Aorta (tissue), 5 donors: ENCODE measurements at regions of chr1 and their contacts with region 1.

Region 1: GRCh38 chr1:114979278-114979891 is 50.2 kb upstream of the TSHB start:
- DNase-seq: peak in 1 of 2 donors; percentile 47
- ATAC-seq: no peak
- H3K4me3 ChIP-seq: no peak overlapping the region
- H3K27ac ChIP-seq: no peak overlapping the region
- H3K4me1 ChIP-seq: no peaks in the 10 kb centered on the region
- H3K27me3 ChIP-seq: no peaks in the 10 kb centered on the region

Region 2: GRCh38 chr1:115052454-115053083 is 73.2 kb after region 1 on chr1:
- intact Hi-C with region 1: loop called (anchors 5 kb)
- DNase-seq: peak in 1 of 2 donors; percentile 62
- ATAC-seq: peak; percentile 73
- H3K4me3 ChIP-seq: no peak overlapping the region
- H3K27ac ChIP-seq: no peak overlapping the region
- H3K4me1 ChIP-seq: no peaks in the 10 kb centered on the region
- H3K27me3 ChIP-seq: no peaks in the 10 kb centered on the region

Region 3: GRCh38 chr1:115062542-115063011 is 83.2 kb after region 1 on chr1:
- intact Hi-C with region 1: no loop called
- DNase-seq: peak; percentile 77 to 80
- ATAC-seq: peak; percentile 69
- H3K4me3 ChIP-seq: no peak overlapping the region
- H3K27ac ChIP-seq: peak overlapping the region; percentile 88 to 98
- H3K4me1 ChIP-seq: peaks cover 2 to 4% of the 10 kb centered on the region in 2 donors
- H3K27me3 ChIP-seq: no peaks in the 10 kb centered on the region

Region 4: GRCh38 chr1:115112496-115113375 is 133.4 kb after region 1 on chr1:
- intact Hi-C with region 1: loop called (anchors 1 to 2 kb)
- DNase-seq: peak in 1 of 2 donors; percentile 81
- ATAC-seq: peak; percentile 81
- H3K4me3 ChIP-seq: no peak overlapping the region
- H3K27ac ChIP-seq: no peak overlapping the region
- H3K4me1 ChIP-seq: no peaks in the 10 kb centered on the region
- H3K27me3 ChIP-seq: no peaks in the 10 kb centered on the region

Region 5: GRCh38 chr1:115595279-115596079 is 616.1 kb after region 1 on chr1:
- intact Hi-C with region 1: loop called (anchors 5 to 10 kb)
- DNase-seq: peak; percentile 91 to 95
- ATAC-seq: peak; percentile 92
- H3K4me3 ChIP-seq: no peak overlapping the region
- H3K27ac ChIP-seq: no peak overlapping the region
- H3K4me1 ChIP-seq: no peaks in the 10 kb centered on the region
- H3K27me3 ChIP-seq: no peaks in the 10 kb centered on the region